BJ (cell line): ENCODE measurements at regions of chr5 and their contacts with region 1.

Region 1: DNA sequence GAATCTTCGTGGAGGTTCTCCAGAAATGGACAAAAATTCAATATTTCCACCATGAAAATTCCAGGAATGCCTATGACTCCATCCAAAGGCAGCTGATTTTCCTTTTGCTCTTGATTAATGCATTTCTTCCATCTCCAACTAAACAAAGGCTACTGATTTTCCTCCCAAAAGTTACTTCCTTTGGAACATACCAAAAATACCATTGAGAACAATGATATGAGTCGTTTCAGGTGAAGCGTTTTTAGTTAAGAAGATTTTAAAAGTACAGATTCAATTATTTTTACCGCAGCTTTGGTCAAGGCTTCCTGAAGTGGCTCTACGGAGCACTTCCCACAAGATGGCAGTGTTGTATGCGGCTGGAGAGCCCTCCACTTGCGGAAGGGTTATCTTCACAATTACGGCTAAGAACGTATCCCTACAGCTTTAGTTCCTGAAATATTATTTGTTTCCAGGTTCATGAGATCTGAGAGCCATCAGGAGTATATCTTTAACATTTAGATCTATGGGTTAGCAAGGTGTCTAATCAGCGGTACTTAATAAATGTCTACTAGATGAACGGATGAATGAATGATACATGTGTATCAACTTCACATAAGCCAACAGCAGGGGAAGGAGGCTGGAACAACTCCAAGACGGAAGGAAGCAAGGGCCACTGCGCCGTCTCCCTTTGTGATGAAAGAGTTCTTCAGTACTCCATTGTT is 35.9 kb upstream of the ARSB start:
- DNase-seq: peak; percentile 36
- H3K4me3 ChIP-seq: no peak overlapping the region
- H3K27me3 ChIP-seq: no peaks in the 10 kb centered on the region
- CTCF ChIP-seq: peak; percentile 88

Region 2: DNA sequence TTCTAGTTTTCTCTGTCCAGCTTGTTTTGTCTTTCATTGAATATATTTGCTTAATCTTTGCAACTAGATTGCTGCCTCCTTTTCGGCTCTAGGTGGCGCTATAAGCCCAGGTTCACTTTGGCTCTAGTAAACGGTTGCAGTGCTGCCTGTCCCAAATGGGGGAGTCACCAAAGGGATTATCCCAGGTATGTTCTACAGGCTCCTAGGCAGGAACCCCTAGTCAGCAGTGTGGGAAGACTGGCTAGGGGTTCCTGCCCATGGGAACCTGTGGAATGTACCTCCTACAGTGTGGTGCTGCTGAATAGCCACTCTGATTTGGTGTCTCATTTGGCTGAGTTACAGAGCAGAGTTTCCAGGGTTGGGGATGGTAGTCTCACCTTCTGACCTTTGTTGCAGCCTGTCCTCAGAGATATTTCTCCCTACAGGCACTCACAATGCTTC is 121.1 kb before region 1 on chr5:
- CTCF ChIA-PET with region 1: interaction called, 11 read pairs
- POLR2A ChIA-PET with region 1: no interaction called
- DNase-seq: no peak
- H3K4me3 ChIP-seq: no peak overlapping the region
- H3K27me3 ChIP-seq: no peaks in the 10 kb centered on the region
- CTCF ChIP-seq: peak; percentile 81

Region 3: DNA sequence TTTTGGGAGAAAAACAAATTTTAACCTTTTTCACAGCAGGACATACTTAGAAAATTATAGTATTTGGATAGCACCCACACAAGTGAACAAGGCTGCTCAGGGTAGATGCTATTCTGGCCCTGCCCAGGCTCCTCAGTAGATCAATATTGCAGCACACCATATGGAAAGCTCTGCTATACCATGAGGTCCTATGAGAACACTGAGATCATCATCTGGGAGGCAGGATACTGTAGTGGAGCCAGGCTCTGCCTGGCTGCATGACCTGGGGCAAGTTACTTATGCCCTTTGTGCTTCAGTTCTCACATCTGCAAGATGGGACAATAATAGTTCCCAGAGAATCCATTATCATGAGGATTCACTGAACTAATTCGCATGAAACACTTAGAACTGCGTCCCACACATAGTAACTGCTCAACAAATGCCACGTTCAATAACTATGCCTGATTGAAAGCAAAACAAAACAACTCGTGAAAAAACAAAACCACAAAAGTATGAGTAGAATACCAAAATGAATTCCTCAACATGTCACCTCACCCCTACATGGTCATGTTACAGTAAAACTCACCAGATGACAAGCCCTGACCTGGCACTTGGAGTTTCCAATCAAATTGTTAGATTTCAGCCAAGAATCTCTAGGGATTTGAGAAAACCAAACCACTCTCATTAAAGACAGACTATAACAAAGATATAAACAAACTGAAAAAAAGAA is 67.8 kb before region 1 on chr5:
- CTCF ChIA-PET with region 1: no interaction called
- POLR2A ChIA-PET with region 1: no interaction called
- DNase-seq: peak; percentile 64
- H3K4me3 ChIP-seq: no peak overlapping the region
- H3K27me3 ChIP-seq: no peaks in the 10 kb centered on the region
- CTCF ChIP-seq: no peak

Region 4: GRCh38 chr5:79035237-79035636 is 14.2 kb after region 1 on chr5:
- CTCF ChIA-PET with region 1: interaction called, 20 read pairs
- POLR2A ChIA-PET with region 1: no interaction called
- DNase-seq: no peak
- H3K4me3 ChIP-seq: no peak overlapping the region
- H3K27me3 ChIP-seq: no peaks in the 10 kb centered on the region
- CTCF ChIP-seq: no peak

Region 5: DNA sequence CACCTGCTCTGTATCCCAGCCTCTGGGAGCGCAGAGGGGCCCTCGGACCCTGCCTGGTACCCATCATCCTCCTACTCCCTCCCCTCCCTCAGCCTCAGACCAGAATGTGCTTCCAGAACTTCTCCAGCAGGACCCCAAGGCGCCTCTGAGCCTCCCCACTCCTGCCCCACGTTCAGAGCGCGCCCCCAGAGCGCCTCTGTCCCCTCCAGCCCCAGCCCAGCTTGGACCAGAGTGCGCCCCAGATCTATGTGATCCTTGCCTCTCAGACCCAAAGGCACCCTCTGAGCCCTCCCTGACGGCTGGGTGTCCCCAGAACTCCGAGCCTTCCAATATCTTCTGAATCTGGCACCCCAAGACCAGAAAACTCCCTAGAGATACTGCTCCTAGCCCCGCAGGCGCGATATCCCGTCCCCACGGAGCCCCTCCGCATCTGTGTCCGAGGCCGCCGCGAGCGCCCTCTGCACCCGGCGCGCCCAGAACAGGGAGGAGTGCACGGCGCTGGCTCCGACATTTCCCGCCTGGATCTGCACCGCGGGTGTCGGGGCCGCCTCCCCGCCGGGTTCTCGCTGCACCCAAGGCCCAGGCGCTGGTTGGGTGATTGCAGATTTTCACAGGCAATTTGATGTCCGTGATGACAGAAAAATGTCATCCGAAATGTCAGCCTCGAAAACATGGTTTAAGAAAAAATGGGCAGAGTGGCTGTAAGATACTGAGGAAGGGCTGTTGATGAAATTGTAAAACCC is 91.1 kb after region 1 on chr5:
- CTCF ChIA-PET with region 1: interaction called, 12 read pairs
- POLR2A ChIA-PET with region 1: no interaction called
- DNase-seq: no peak
- H3K4me3 ChIP-seq: no peak overlapping the region
- H3K27me3 ChIP-seq: peaks cover 19% of the 10 kb centered on the region
- CTCF ChIP-seq: no peak

Region 6: DNA sequence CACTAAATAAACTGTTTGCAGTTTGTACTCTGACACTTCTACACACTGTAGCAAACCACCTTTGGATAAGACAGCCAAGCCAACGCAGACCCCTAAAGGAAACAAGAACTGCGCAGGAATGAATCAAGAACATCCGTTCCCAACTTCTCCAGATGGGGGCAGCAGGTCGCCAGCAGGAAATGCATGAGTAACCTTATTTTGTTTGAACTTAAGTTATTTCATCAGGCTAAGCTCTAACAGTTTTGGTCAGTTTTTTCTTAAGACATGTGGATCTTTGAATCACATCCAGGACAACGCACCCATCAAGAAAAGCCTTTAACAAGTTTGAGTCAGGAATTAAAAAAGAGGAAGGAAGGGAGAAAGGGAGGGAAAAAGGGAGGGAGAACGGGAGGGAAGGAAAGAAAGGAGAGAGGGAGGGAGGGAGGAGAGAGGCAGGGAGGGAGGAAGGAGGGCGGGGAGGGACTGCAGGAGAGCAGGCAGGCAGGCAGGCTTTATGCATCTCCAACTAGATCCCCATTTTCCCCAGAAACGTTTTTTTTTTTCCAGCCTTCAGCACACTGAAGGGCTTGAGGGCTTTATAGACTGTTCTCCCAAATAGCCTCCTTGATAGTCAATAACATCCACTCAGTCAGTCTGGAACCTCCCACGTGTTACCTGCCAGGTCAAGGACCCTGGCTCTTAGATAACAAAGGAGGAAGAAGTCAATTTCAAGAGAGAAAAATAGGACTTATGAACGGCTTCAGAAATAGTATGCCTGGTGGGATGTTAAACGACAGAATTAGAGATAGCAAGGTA is 112.8 kb after region 1 on chr5:
- CTCF ChIA-PET with region 1: interaction called, 439 read pairs
- POLR2A ChIA-PET with region 1: no interaction called
- DNase-seq: peak; percentile 66
- H3K4me3 ChIP-seq: peak overlapping the region; percentile 34
- H3K27me3 ChIP-seq: no peaks in the 10 kb centered on the region
- CTCF ChIP-seq: peak; percentile 85